Activated CD4-positive, alpha-beta T cell treated with anti-CD3 and anti-CD28 coated beads for 36 hours (primary cell): ENCODE measurements at regions of chr17 and their contacts with region 1.

Region 1: GRCh38 chr17:26809033-26809432 is 484.9 kb upstream of the WSB1 start:
- DNase-seq: no peak
- ATAC-seq: no peak
- H3K4me3 Mint-ChIP-seq: no peak overlapping the region
- H3K27ac Mint-ChIP-seq: no peak overlapping the region
- H3K4me1 Mint-ChIP-seq: no peaks in the 10 kb centered on the region
- H3K27me3 Mint-ChIP-seq: no peaks in the 10 kb centered on the region

Region 2: GRCh38 chr17:26731005-26731921 is 77.8 kb before region 1 on chr17:
- CTCF ChIA-PET with region 1: no interaction called
- POLR2A ChIA-PET with region 1: no interaction called
- intact Hi-C with region 1: loop called in 1 of 2 experiments (anchors 10 kb)
- DNase-seq: no peak
- ATAC-seq: no peak
- H3K4me3 Mint-ChIP-seq: no peak overlapping the region
- H3K27ac Mint-ChIP-seq: no peak overlapping the region
- H3K4me1 Mint-ChIP-seq: no peaks in the 10 kb centered on the region
- H3K27me3 Mint-ChIP-seq: peaks cover 3% of the 10 kb centered on the region

Region 3: GRCh38 chr17:26792486-26792885 is 16.5 kb before region 1 on chr17:
- CTCF ChIA-PET with region 1: no interaction called
- POLR2A ChIA-PET with region 1: no interaction called
- intact Hi-C with region 1: no loop called
- DNase-seq: no peak
- ATAC-seq: no peak
- H3K4me3 Mint-ChIP-seq: no peak overlapping the region
- H3K27ac Mint-ChIP-seq: no peak overlapping the region
- H3K4me1 Mint-ChIP-seq: no peaks in the 10 kb centered on the region
- H3K27me3 Mint-ChIP-seq: no peaks in the 10 kb centered on the region